H1 (cell line): ENCODE measurements at regions of chr5 and their contacts with region 1.

Region 1: GRCh38 chr5:150700594-150701293 is at the start of gene RBM22:
- DNase-seq: peak; percentile 76 to 94
- H3K4me3 ChIP-seq: peak within 1 kb of the TSS; percentile 85 to 96 (median 90)
- H3K27ac ChIP-seq: peak within 1 kb of the TSS; percentile 99
- H3K4me1 ChIP-seq: peaks cover 0 to 7% (median 2%) of the 10 kb centered on the region in 4 experiments; a peak in 4 of 7 replicates
- H3K27me3 ChIP-seq: no peaks in the 10 kb centered on the region
- CTCF ChIP-seq: peak; percentile 25 to 49 (median 39)
- EP300 ChIP-seq: peak in 1 of 2 experiments; percentile 81; a peak in 2 of 3 replicates
- POLR2A ChIP-seq: peak; percentile 89 to 97
- RAD21 ChIP-seq: no peak; a peak in 1 of 4 replicates
- total RNA-seq, gene RBM22: 33.9 and 34.0 TPM in 2 replicates

Region 2: DNA sequence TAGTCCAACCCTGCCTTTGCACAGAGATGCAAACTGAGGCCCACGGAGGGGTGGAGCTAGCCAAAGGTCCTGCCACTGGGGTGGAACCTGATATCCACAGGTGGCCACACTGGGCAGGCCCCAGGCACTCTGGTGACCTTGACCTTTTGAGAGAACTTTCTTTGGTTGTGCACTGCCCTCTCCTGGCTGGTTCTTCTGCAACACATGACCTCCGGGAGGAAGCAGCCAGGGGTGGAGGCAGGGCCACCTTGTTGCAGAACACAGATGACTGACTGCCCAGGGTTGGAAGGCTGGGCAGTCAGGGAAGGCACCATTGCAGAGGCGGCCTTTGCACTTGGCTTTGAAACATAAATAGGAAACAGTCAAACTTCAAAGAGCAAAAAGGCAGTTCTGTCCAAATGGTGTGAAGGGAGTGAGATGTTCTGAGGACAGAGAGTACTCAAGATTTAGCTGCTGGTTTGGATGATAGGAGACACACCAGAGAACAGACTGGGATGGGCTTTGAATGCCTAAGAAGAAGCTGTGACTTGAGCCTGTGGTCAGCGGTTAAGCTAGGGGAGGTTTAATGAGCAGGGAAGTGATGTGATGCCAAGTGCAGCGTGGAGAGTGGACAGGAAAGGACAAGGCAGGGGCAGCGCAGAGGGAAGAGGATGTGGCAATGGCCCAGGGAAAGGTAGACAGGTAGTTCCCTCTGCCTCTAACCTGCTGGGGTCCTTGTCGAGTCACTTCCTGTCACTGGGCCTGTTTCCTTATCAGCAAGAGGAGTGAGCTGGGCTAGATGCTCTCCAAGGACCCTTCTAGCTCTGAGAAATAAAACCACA is 350.0 kb before region 1 on chr5:
- CTCF ChIA-PET with region 1: no interaction called
- POLR2A ChIA-PET with region 1: no interaction called
- DNase-seq: peak; percentile 62 to 83
- H3K4me3 ChIP-seq: no peak overlapping the region
- H3K27ac ChIP-seq: no peak overlapping the region
- H3K4me1 ChIP-seq: peaks cover 0 to 6% (median 0%) of the 10 kb centered on the region in 4 experiments; a peak in 4 of 7 replicates
- H3K27me3 ChIP-seq: no peaks in the 10 kb centered on the region
- CTCF ChIP-seq: peak; percentile 81 to 94 (median 90)
- EP300 ChIP-seq: no peak
- POLR2A ChIP-seq: no peak
- RAD21 ChIP-seq: peak; percentile 96 to 98

Region 3: DNA sequence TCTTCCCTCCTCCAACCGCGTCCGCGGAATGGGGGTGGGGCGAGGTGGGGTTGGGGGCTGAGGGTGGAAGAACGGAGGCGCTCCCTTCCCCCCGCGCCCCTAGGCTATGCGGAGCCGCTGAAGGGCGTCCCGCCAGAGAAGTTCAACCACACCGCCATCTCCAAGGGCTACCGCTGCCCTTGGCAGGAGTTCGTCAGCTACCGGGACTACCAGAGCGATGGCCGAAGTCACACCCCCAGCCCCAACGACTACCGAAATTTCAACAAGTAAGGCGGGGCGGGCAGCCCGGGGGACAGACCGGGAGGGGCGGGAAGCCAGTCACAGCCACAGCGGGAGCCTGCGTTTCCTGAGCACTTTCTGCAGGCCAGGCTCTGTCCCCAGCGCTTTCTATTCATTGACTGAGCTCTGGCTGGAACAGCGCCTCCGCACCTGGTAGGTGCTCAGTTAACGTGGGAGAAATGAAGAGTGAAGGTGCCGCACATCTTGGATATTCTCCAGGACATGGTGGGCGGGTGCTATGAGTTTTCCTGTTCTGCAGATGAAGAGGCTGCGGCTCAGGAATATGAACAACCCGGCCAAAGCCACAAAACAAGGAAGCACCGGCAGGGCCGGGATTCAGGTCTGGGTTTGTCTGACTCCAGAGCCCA is 28.4 kb before region 1 on chr5:
- CTCF ChIA-PET with region 1: interaction called, 8 read pairs
- POLR2A ChIA-PET with region 1: interaction called, 26 read pairs
- DNase-seq: peak; percentile 58 to 84
- H3K4me3 ChIP-seq: peak overlapping the region; percentile 88 to 96 (median 93)
- H3K27ac ChIP-seq: peak overlapping the region; percentile 90
- H3K4me1 ChIP-seq: peaks cover 5 to 23% (median 14%) of the 10 kb centered on the region in 4 experiments
- H3K27me3 ChIP-seq: no peaks in the 10 kb centered on the region
- CTCF ChIP-seq: no peak
- EP300 ChIP-seq: no peak
- POLR2A ChIP-seq: peak in 1 of 2 experiments; percentile 52; a peak in 2 of 3 replicates
- RAD21 ChIP-seq: no peak

Region 4: GRCh38 chr5:150689120-150689519 is 11.6 kb before region 1 on chr5:
- CTCF ChIA-PET with region 1: interaction called, 10 read pairs
- POLR2A ChIA-PET with region 1: interaction called, 33 read pairs
- DNase-seq: no peak
- H3K4me3 ChIP-seq: no peak overlapping the region
- H3K27ac ChIP-seq: no peak overlapping the region
- H3K4me1 ChIP-seq: no peaks in the 10 kb centered on the region
- H3K27me3 ChIP-seq: no peaks in the 10 kb centered on the region
- CTCF ChIP-seq: no peak
- EP300 ChIP-seq: no peak
- POLR2A ChIP-seq: no peak
- RAD21 ChIP-seq: no peak

Region 5: DNA sequence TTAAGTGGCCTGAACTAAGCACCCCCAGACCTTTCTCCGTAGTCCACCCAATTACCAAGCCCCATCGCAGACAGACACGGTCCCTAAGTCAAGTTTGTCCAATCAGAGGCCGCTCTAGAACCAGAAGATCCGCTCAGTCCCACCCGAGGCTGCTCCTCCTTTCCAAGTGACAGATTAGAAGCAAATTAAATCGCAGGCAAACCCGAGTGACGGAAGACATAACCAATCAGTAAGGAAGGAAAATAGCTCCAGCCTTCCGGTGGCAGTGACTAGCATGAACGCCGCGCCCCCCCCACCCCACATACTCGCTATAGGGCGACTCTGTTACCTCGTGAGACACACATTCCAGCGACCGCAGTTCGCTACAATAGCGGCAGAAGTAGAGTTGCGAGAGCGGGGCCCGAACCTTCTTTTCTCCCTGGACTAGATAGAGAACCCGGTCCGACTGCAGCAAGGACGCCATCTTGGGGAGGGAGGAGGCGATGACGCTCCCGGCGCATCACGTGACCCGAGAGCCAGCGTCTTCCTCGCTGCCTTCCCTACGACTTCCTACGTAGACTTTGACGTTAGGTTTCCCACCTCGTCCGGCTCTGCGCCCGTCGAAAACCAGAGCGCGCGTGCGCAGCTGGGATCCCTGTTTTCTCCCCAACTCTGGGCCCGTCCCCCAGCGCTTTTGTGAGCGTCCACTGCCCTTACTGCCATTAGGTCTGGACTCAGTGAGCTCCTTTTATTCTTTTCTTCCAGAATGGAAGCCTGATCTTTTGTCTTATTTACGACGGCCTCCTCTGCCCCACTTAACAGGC is 58.0 kb after region 1 on chr5 and contains the start of gene DCTN4:
- CTCF ChIA-PET with region 1: interaction called, 6 read pairs
- POLR2A ChIA-PET with region 1: interaction called, 13 read pairs
- DNase-seq: peak; percentile 95
- H3K4me3 ChIP-seq: peak within 1 kb of the TSS; percentile 77 to 98 (median 81)
- H3K27ac ChIP-seq: peak within 1 kb of the TSS; percentile 92
- H3K4me1 ChIP-seq: peaks cover 0 to 2% (median 0%) of the 10 kb centered on the region in 4 experiments; a peak in 1 of 7 replicates
- H3K27me3 ChIP-seq: peaks cover 0 to 3% (median 0%) of the 10 kb centered on the region in 4 experiments; a peak in 1 of 7 replicates
- CTCF ChIP-seq: 0 out of 4 replicates have a peak, but pooled peaks of 1 of the 3 experiments have one; percentile 16
- EP300 ChIP-seq: no peak
- POLR2A ChIP-seq: peak; percentile 85 to 88
- RAD21 ChIP-seq: no peak
- total RNA-seq, gene DCTN4: 42.5 and 42.7 TPM in 2 replicates

Region 6: DNA sequence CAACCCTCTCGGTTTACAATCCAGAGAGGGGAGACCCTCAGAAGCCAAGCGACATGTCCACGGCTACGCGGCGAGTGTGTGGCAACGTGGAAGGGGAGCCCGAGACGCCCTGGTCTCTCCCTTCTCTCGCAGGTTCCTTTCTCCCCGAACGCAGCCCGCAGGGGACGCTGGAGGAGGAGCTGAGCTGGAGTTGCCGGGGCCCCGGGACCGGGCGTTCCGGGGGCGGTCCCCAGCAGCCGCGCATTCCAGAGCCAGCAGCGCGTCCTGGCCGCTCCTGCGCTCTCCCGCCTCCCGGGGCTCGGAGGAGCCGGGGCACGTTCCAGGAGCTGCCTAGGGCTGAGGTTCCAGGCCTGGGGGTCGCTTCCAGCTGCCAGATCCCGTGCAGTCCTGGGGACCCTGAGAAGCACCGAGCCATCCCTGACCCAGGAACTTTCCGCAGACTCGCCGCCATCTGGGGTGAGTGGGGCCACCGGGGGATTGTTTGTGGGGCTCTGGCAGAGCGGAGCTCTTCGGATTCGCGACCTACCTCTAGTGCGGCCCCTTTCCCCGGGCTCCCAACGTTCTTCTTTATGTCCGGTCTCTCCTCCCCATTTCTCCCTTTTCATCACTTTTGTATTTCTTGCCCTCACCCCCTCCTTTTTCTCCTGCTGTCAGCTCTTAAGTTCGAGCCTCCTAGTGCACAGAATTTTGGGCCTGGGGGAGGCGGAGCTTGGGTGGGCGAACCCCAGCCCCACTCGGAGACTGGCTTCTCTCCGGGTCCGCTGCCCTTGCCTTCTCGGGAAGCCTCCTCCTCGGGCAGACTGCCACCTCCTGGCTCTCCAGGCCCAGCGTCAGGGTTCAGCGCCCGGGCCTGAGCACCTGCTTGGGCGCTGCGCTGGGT is 78.0 kb after region 1 on chr5 and contains the start of gene SMIM3:
- CTCF ChIA-PET with region 1: interaction called, 10 read pairs
- POLR2A ChIA-PET with region 1: interaction called, 10 read pairs
- DNase-seq: peak in 1 of 2 experiments; percentile 86
- H3K4me3 ChIP-seq: peak within 1 kb of the TSS; percentile 51 to 80 (median 74)
- H3K27ac ChIP-seq: 0 out of 2 replicates have a peak within 1 kb of the TSS, but pooled peaks have one; percentile 8
- H3K4me1 ChIP-seq: peaks cover 6 to 14% (median 10%) of the 10 kb centered on the region in 4 experiments; a peak in 5 of 7 replicates
- H3K27me3 ChIP-seq: peaks cover 0 to 8% (median 0%) of the 10 kb centered on the region in 4 experiments; a peak in 3 of 7 replicates
- CTCF ChIP-seq: peak; percentile 53 to 67 (median 60)
- EP300 ChIP-seq: no peak
- POLR2A ChIP-seq: peak; percentile 34 to 82
- RAD21 ChIP-seq: peak; percentile 64 to 74
- total RNA-seq, gene SMIM3: 10.4 and 13.2 TPM in 2 replicates

Region 7: DNA sequence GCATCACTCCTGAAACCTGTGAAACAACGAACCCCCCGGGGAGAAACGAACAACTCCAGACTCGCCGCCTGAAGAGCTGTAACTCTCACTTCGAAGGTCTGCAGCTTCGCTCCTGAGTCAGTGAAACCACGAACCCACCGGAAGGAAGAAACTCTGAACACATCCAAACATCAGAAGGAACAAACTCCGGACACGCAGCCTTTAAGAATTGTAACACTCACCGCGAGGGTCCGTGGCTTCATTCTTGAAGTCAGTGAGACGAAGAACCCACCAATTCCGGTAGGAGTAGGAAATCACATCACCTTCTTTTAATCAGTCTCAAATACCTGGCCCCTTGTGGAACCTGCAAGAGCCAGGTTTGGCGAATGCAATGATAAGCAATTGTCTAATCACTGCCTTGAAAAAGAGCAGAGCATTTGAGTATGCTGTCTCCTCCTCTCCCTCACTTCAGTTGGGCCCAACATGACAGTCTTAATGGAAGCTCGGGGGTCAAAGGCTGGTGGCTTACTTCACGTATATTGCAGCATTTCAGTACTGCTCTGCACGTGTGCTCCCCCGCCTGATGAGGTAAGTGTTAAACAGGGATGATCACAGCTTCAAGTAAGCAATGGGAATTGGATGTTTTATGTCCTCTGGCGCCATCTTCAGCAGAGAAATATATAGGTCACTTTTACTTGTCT is 146.1 kb after region 1 on chr5:
- CTCF ChIA-PET with region 1: interaction called, 14 read pairs
- POLR2A ChIA-PET with region 1: interaction called, 7 read pairs
- DNase-seq: peak; percentile 27 to 51
- H3K4me3 ChIP-seq: no peak overlapping the region
- H3K27ac ChIP-seq: no peak overlapping the region
- H3K4me1 ChIP-seq: peaks cover 0 to 3% (median 0%) of the 10 kb centered on the region in 4 experiments; a peak in 1 of 7 replicates
- H3K27me3 ChIP-seq: peaks cover 0 to 5% (median 4%) of the 10 kb centered on the region in 4 experiments; a peak in 4 of 7 replicates
- CTCF ChIP-seq: peak in 2 of 3 experiments; percentile 80; a peak in 3 of 4 replicates
- EP300 ChIP-seq: no peak
- POLR2A ChIP-seq: no peak
- RAD21 ChIP-seq: peak; percentile 89 to 93